A673 (cell line): ENCODE measurements at regions of chr11 and their contacts with region 1.

Region 1: DNA sequence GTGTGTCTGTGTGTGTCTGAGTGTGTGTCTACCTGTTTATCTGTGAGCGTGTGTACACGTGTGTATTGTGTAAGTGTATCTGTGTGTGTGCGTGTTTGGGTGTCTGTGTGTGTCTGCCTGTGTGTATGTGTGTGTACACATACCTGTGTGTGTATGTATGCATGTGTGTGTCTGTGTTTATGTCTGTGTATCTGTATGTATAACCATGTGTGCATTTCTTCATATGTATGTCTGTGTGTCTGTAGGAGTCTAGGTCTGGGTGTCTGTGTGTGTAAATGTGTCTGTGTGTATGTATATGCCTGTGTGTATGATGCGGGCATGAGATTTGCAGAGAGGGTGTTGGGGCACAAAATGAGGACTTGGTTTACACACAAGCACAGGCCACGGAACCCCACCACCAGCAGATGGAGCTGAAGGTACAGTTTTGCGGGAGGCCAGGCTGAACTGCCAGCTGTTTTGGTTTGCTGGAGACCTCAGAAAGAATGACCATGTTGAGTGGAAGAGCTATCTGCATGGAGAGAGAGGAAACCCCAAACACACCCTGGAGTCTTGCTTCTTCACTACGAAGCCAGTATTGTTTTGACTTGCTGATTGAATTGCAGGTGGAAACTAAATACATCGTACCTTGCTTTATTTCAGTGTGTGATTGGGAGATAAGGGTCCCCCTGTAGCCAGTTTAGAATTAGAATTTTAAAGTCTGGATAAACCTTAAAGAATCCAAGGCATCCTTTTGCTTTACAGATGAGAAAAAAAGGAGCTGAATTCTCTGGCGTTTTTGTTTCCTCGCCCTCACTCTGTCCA is 497.2 kb downstream of the NTM start:
- DNase-seq: peak; percentile 91
- H3K4me3 ChIP-seq: no peak overlapping the region
- H3K27ac ChIP-seq: peak overlapping the region; percentile 43
- H3K4me1 ChIP-seq: peaks cover 35% of the 10 kb centered on the region
- H3K27me3 ChIP-seq: no peaks in the 10 kb centered on the region
- CTCF ChIP-seq: peak; percentile 91

Region 2: DNA sequence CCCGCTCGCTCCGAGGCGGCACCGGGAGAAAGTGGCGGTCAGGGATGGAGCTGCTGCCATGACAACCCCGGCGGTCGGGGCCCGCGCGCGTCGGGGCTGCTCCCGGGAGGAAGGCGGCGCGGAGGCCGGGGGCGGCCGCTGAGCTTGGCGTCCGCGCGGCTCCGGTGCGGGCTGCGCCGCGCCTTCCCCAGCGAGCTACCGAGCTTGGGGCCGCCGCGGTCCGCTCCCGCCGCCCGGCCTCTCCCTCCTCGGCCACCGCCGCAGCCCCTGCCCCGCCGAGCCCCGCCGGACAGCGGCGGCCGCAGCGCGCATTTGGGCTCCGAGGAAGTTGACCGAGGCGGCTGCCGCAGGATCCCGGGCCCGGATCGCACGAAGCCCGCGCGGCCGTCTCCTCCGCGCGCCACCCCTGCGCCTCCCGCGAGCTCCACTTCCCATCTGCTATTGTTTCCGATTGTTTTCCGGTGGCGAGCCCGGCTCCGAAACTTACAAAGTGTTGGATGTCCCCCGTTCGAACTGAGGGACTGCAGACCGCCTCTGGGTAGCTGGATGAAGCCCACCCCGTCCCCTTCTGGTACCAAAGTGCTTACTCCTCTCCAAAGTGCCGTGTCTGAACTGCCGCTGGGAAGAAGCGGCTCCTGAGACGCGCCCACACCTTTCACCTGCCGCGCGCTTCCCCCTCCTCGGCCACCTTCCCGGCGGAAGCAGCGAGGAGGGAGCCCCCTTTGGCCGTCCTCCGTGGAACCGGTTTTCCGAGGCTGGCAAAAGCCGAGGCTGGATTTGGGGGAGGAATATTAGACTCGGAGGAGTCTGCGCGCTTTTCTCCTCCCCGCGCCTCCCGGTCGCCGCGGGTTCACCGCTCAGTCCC is 43.1 kb after region 1 on chr11:
- CTCF ChIA-PET with region 1: interaction called, 16 read pairs
- POLR2A ChIA-PET with region 1: no interaction called
- intact Hi-C with region 1: loop called (anchors 1 kb)
- DNase-seq: peak; percentile 56
- H3K4me3 ChIP-seq: peak overlapping the region; percentile 62
- H3K27ac ChIP-seq: peak overlapping the region; percentile 91
- H3K4me1 ChIP-seq: peaks cover 71% of the 10 kb centered on the region
- H3K27me3 ChIP-seq: no peaks in the 10 kb centered on the region
- CTCF ChIP-seq: no peak

Region 3: GRCh38 chr11:131924457-131925201 is 57.0 kb after region 1 on chr11:
- CTCF ChIA-PET with region 1: no interaction called
- POLR2A ChIA-PET with region 1: no interaction called
- intact Hi-C with region 1: no loop called
- DNase-seq: no peak
- H3K4me3 ChIP-seq: no peak overlapping the region
- H3K27ac ChIP-seq: no peak overlapping the region
- H3K4me1 ChIP-seq: peaks cover 17% of the 10 kb centered on the region
- H3K27me3 ChIP-seq: no peaks in the 10 kb centered on the region
- CTCF ChIP-seq: no peak

Region 4: GRCh38 chr11:132028380-132029240 is 161.0 kb after region 1 on chr11:
- CTCF ChIA-PET with region 1: no interaction called
- POLR2A ChIA-PET with region 1: no interaction called
- intact Hi-C with region 1: loop called (anchors 1 kb)
- DNase-seq: peak; percentile 90
- H3K4me3 ChIP-seq: no peak overlapping the region
- H3K27ac ChIP-seq: peak overlapping the region; percentile 60
- H3K4me1 ChIP-seq: peaks cover 54% of the 10 kb centered on the region
- H3K27me3 ChIP-seq: no peaks in the 10 kb centered on the region
- CTCF ChIP-seq: peak; percentile 78

Region 5: DNA sequence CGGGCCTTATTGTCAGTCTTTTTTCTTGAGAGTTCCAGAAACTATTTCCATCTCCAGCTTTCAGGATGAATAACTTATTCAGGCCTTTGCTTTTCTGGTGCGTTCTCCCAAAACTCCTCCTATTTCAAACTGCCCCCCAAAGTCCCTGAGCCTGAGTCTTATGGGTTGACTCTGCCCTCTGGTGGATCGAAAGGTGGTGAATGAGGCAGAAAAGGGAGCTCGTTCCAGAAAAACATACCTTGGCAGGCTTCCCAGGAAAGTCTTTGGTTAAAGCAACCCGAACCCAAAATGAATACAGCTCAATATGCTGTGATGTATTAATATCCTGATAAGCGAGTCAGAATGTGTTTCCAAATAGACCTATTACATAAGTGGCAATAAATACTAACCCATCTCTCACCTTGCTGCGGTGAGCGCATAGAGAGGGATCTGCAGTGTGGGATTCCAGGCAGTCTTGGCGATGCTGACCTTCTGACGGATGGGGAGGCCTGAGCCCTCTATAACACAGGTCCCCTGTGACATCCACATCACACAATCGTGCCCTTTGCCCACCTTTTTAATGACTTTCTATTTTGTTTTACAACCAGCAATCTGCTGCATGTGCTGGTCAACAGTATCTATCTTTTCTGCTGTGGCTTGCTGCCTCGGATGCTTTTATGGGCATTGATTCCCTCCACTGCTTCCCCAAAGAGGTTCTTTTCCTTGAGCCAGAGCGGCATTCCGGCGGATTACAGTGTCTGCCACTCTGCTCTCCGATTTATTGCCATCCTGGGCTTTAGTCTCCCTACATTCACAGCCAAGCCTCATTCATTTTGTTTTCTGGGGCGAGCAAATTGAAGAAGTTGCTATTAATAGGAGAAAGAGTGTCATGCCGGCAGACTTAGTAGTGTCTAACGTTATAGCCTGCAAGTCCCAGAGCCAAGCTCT is 259.6 kb after region 1 on chr11:
- CTCF ChIA-PET with region 1: interaction called, 14 read pairs
- POLR2A ChIA-PET with region 1: no interaction called
- intact Hi-C with region 1: loop called (anchors 2 kb)
- DNase-seq: peak; percentile 90
- H3K4me3 ChIP-seq: no peak overlapping the region
- H3K27ac ChIP-seq: peak overlapping the region; percentile 72
- H3K4me1 ChIP-seq: peaks cover 21% of the 10 kb centered on the region
- H3K27me3 ChIP-seq: no peaks in the 10 kb centered on the region
- CTCF ChIP-seq: peak; percentile 78